Activated T-helper 2 cell treated with anti-CD3 and anti-CD28 coated beads, Interferon-gamma antibody, Interleukin-2, Interleukin-4, amounts not matched to agents 10 μg/mL and 5 μg/mL and 100 μg/mL, durations not matched to agents 14 hours and 24 hours and 36 hours (primary cell): ENCODE measurements at regions of chr13 and their contacts with region 1.

Region 1: DNA sequence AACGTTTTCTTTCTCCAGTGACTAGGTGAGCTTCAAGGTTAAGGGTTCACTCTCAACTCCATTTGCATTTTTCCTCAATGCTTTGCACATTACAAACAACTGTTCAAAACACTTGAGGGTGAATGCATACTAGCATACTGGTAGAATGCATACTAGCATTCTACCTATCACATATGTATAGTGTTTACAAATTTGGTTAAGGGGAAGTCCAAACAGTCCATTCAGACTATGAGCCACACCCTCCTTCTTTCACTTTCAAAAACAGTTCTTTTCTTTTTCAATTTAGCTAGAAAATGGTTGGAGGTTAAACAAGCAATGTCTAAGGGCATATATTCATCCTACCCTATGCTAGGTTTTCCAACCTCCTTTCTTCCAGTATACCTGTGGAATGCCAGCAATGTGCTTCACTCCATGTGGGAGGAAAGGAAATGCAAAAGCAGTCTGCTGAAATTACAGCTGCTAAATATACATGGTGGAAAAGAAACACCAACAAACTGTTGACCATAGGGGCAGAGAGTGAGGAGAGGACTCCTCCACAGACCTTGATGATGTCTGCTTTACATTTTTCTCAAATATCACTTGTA is 102.6 kb downstream of the DOCK9 start:
- DNase-seq: no peak
- H3K4me3 Mint-ChIP-seq: peak overlapping the region; percentile 27
- H3K27ac Mint-ChIP-seq: peak overlapping the region; percentile 84
- H3K4me1 Mint-ChIP-seq: peaks cover 31% of the 10 kb centered on the region
- H3K27me3 Mint-ChIP-seq: no peaks in the 10 kb centered on the region

Region 2: GRCh38 chr13:98586400-98587345 is 288.6 kb before region 1 on chr13:
- intact Hi-C with region 1: no loop called
- DNase-seq: no peak
- H3K4me3 Mint-ChIP-seq: no peak overlapping the region
- H3K27ac Mint-ChIP-seq: no peak overlapping the region
- H3K4me1 Mint-ChIP-seq: peaks cover 22% of the 10 kb centered on the region
- H3K27me3 Mint-ChIP-seq: peaks cover 1% of the 10 kb centered on the region

Region 3: GRCh38 chr13:98890186-98890585 is 14.9 kb after region 1 on chr13:
- intact Hi-C with region 1: loop called (anchors 2 kb)
- DNase-seq: no peak
- H3K4me3 Mint-ChIP-seq: no peak overlapping the region
- H3K27ac Mint-ChIP-seq: peak overlapping the region; percentile 17
- H3K4me1 Mint-ChIP-seq: peaks cover 19% of the 10 kb centered on the region
- H3K27me3 Mint-ChIP-seq: no peaks in the 10 kb centered on the region

Region 4: GRCh38 chr13:98900442-98900841 is 25.2 kb after region 1 on chr13:
- intact Hi-C with region 1: no loop called
- DNase-seq: no peak
- H3K4me3 Mint-ChIP-seq: no peak overlapping the region
- H3K27ac Mint-ChIP-seq: no peak overlapping the region
- H3K4me1 Mint-ChIP-seq: peaks cover 24% of the 10 kb centered on the region
- H3K27me3 Mint-ChIP-seq: no peaks in the 10 kb centered on the region

Region 5: DNA sequence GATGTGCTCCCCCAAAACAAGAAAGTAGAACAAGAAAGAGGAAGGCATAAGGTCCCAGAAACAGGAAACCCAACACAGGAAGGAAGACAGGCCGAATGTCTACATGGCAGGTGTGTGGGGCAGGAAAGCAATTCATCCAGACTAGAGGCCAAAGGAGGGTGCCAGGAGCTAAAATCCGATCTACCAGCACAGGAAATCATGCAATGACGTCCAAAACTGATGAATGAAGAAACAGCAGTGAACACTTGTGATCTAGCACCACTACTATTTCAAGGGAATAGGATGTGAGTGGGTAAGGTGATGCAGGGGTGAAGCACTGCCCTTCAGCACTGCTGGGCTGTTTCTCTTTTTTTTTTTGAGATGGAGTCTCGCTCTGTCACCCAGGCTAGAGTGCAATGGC is 43.5 kb after region 1 on chr13:
- intact Hi-C with region 1: loop called (anchors 2 kb)
- DNase-seq: no peak
- H3K4me3 Mint-ChIP-seq: no peak overlapping the region
- H3K27ac Mint-ChIP-seq: peak overlapping the region; percentile 30
- H3K4me1 Mint-ChIP-seq: peaks cover 32% of the 10 kb centered on the region
- H3K27me3 Mint-ChIP-seq: no peaks in the 10 kb centered on the region

Region 6: GRCh38 chr13:99218969-99219368 is 343.7 kb after region 1 on chr13:
- intact Hi-C with region 1: no loop called
- DNase-seq: peak; percentile 64
- H3K4me3 Mint-ChIP-seq: peak overlapping the region; percentile 69
- H3K27ac Mint-ChIP-seq: peak overlapping the region; percentile 90
- H3K4me1 Mint-ChIP-seq: peaks cover 83% of the 10 kb centered on the region
- H3K27me3 Mint-ChIP-seq: no peaks in the 10 kb centered on the region

Region 7: GRCh38 chr13:99969919-99970621 is 1094.8 kb after region 1 on chr13:
- intact Hi-C with region 1: no loop called
- DNase-seq: no peak
- H3K4me3 Mint-ChIP-seq: no peak overlapping the region
- H3K27ac Mint-ChIP-seq: peak overlapping the region; percentile 65
- H3K4me1 Mint-ChIP-seq: peaks cover 8% of the 10 kb centered on the region
- H3K27me3 Mint-ChIP-seq: peaks cover 72% of the 10 kb centered on the region